ENCODE measurements at regions of chr3 and their contacts with region 1.

Region 1: DNA sequence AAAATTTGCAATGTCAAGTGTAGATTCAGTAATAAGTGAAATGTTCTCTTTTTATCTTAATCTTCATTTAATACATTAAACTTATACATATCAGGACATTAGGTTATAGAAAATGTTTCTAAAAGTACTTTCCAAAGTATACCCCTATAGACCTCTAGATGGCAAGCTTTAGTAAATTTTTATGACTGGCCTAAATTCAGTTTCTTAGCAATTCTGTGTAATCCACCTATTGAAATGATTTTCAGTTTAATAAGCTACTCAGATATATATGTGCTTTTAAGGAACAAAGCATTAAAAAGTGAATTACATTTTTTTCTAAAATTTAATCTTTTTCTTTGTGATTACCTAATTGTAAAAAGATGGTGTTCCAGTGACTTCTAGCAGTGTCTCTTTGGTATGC is 342.2 kb downstream of the GBE1 start:
- DNase-seq: peak; percentile 22
- ATAC-seq: peak; percentile 72
- H3K4me3 ChIP-seq: no peak overlapping the region
- H3K27ac ChIP-seq: no peak overlapping the region
- H3K4me1 ChIP-seq: no peaks in the 10 kb centered on the region
- H3K27me3 ChIP-seq: no peaks in the 10 kb centered on the region
- CTCF ChIP-seq: peak; percentile 55
- POLR2A ChIP-seq: no peak
- RAD21 ChIP-seq: peak; percentile 40

Region 2: DNA sequence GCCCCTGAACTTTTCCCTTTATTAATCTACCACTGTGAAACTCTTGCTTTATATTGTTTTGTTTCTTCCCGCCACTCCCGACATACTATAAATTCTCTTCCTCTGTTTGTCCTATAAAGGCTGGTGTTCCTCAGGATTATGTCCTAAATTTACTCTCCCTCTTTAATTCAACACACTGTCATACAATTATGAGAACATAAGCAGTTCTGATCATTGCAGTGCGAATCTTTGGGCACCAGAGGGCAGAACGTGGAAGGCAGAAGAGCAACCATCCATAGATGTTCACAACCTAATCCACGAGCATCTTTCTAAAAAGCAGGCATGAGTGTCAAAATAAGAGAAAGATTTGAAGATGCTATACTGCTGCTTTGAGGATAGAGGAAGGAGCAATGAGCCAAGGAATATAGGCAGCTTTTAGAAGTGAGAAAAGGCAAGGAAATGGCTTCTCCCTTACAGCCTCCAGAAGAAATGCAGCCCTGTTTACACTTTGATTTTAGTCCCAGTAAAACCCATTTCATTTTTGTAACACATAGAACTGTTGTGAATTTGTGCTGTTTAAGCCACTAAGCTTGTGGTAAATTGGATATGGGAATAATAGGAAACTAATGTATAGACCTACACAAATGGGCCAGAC is 162.9 kb after region 1 on chr3:
- CTCF ChIA-PET with region 1: interaction called, 4 read pairs
- POLR2A ChIA-PET with region 1: no interaction called
- dilution Hi-C with region 1: no loop called
- in situ Hi-C with region 1: no loop called
- intact Hi-C with region 1: loop called (anchors 5 kb)
- DNase-seq: peak; percentile 47
- ATAC-seq: peak; percentile 88
- H3K4me3 ChIP-seq: no peak overlapping the region
- H3K27ac ChIP-seq: no peak overlapping the region
- H3K4me1 ChIP-seq: no peaks in the 10 kb centered on the region
- H3K27me3 ChIP-seq: no peaks in the 10 kb centered on the region
- CTCF ChIP-seq: peak; percentile 62
- POLR2A ChIP-seq: no peak
- RAD21 ChIP-seq: peak; percentile 69

Measured in IMR-90 (cell line).